ENCODE measurements at regions of chr17 and their contacts with region 1.

Region 1: DNA sequence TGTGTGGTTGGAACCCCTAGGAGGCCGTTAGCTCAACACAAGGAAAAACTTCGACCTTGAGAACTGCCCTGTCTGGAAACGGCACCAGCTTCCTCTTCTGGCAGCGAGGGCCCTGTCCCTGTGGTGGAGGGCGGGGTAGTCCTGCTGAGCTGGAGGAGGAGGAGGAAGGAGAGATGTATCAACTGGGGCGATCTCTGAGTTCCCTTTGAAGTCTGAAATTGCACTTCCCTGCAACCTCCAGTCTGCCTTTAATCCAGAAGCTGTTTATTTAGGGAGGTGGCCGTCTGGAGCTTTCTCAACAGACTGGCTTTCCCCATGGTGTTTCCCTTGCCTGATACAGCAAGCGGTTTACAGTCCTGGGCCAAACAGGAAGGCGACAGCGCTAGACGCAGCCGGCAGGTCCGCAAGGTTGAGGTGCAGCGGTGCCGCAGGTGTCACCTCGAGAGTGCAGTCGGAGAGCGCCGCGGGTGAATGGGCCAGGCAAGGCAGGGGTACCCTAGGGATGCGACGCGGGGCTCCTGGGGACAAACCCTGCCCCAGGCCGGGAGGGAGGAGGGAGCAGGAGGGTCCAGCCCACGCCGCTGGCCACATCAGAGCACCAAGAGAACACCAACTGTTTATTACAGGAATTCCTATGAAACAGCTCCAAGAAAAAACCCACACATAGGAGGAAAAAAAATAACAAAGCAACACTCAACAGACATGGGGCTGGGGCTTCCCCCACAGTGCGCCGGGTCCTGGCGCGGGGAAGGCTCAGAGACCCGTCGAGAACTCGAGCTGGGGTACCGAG is 11.4 kb upstream of the MRPS23 start:
- DNase-seq: peak; percentile 41
- ATAC-seq: peak; percentile 75
- H3K4me3 Mint-ChIP-seq: peak overlapping the region; percentile 62
- H3K27ac Mint-ChIP-seq: no peak overlapping the region
- H3K4me1 Mint-ChIP-seq: peaks cover 13% of the 10 kb centered on the region
- H3K27me3 Mint-ChIP-seq: peaks cover 35% of the 10 kb centered on the region
- CTCF ChIP-seq: no peak

Region 2: DNA sequence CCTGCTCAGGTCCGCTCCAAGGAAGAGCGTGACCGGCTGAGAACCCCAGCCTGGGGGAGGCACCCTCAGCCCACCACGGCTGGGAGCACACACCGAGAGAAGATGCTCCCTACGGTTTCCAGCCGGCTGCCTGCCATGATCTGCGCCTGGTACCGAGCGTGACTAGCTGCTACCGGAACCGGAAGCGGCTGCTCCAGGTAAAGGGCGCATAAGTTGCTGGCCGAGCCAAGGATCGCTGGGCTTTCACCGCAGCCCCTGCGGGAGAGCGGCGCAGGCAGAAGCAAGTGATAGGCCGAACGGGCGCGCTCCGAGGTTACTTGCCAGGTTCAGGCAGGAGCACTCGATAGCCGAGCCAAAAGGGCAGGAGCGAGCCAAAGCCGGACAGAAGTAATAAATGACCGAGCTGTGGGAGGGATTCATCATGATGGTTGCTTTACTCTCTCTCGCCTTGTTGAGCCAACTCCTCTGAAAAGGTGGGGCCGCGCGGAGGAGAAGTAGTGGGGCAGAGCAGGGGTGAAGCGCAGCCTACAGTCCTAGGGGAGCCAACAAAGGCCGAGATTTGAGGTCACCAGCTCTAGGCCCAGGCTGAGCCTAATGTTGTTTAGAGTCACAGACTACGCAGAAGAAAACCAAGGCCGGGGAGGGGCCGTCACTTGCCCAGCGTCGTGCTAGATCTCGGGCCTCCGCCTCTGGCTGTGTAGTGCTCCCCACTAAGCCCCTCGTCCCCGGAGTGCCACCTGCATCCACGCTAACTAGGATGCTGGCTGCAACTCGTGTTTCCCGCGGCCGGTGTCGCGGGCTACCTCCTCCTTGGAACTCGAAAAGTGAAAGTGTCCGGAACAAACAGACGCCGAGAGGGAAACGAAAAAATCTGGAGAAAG is 11.1 kb before region 1 on chr17 and contains the start of gene MRPS23:
- CTCF ChIA-PET with region 1: interaction called, 14 read pairs
- POLR2A ChIA-PET with region 1: interaction called, 11 read pairs
- intact Hi-C with region 1: no loop called
- DNase-seq: peak; percentile 98
- ATAC-seq: peak; percentile 97
- H3K4me3 Mint-ChIP-seq: peak within 1 kb of the TSS; percentile 91
- H3K27ac Mint-ChIP-seq: peak within 1 kb of the TSS; percentile 95
- H3K4me1 Mint-ChIP-seq: peaks cover 30% of the 10 kb centered on the region
- H3K27me3 Mint-ChIP-seq: no peaks in the 10 kb centered on the region
- CTCF ChIP-seq: no peak
- total RNA-seq, gene MRPS23: 69.5 to 70.0 TPM

Region 3: GRCh38 chr17:57982452-57983170 is 121.4 kb after region 1 on chr17:
- CTCF ChIA-PET with region 1: interaction called, 19 read pairs
- POLR2A ChIA-PET with region 1: interaction called, 3 read pairs
- intact Hi-C with region 1: no loop called
- DNase-seq: no peak
- ATAC-seq: peak; percentile 6
- H3K4me3 Mint-ChIP-seq: no peak overlapping the region
- H3K27ac Mint-ChIP-seq: peak overlapping the region; percentile 14
- H3K4me1 Mint-ChIP-seq: peaks cover 60% of the 10 kb centered on the region
- H3K27me3 Mint-ChIP-seq: no peaks in the 10 kb centered on the region
- CTCF ChIP-seq: no peak

Region 4: DNA sequence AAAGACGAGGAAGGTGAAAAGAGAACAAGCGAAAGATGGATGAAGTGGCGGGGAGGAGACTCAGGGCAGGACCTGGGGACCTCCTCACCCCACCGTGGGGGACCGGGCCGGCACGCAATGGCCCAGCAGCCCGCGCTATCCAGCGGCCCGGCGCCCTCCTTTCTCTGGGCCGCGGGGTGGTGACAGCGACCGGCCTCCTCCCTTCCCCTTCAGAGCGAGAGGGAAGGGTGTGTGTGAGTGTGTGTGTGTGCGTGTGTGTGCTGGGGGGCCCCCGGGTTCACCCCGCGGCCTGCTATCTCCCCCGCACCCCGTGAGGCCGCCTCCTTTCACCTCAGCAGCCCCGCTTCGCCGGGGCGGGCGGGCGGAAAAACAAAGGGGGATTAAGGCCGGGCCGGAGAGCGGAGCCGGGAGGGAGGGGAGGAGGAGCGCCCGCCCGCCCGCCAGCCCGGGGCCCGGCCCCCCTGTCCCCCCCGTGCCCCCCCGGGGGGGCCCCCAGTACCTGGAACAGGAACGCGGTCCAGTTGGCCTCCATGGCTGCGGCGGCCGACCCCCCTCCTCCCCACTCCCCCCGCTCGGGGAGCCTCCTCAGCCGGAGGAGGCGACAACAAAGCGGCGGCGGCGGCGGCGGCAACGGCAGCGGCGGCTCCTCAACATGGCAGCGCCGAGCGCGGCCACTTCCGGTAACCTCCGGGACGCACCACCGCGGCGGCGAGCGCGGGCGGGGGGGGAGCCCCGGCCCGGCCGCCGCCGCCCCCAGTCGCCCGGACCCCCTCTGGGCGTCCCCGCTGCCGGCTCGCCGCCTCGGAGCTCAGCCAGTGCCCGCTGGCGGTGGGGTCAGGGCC is 126.6 kb after region 1 on chr17 and contains the start of gene VEZF1:
- CTCF ChIA-PET with region 1: interaction called, 177 read pairs
- POLR2A ChIA-PET with region 1: interaction called, 6 read pairs
- intact Hi-C with region 1: no loop called
- DNase-seq: peak; percentile 81
- ATAC-seq: peak; percentile 64
- H3K4me3 Mint-ChIP-seq: peak within 1 kb of the TSS; percentile 87
- H3K27ac Mint-ChIP-seq: peak within 1 kb of the TSS; percentile 91
- H3K4me1 Mint-ChIP-seq: peaks cover 67% of the 10 kb centered on the region
- H3K27me3 Mint-ChIP-seq: no peaks in the 10 kb centered on the region
- CTCF ChIP-seq: no peak
- total RNA-seq, gene VEZF1: 17.9 to 19.6 TPM

Region 5: GRCh38 chr17:58172369-58173071 is 311.3 kb after region 1 on chr17:
- CTCF ChIA-PET with region 1: interaction called, 10 read pairs
- POLR2A ChIA-PET with region 1: no interaction called
- intact Hi-C with region 1: loop called (anchors 5 kb)
- DNase-seq: peak; percentile 69
- ATAC-seq: peak; percentile 96
- H3K4me3 Mint-ChIP-seq: no peak overlapping the region
- H3K27ac Mint-ChIP-seq: peak overlapping the region; percentile 49
- H3K4me1 Mint-ChIP-seq: peaks cover 39% of the 10 kb centered on the region
- H3K27me3 Mint-ChIP-seq: no peaks in the 10 kb centered on the region
- CTCF ChIP-seq: peak; percentile 79